ENCODE measurements at regions of chr5 and their contacts with region 1.

Region 1: GRCh38 chr5:14871210-14872069 is at the start of gene ANKH:
- DNase-seq: peak; percentile 74 to 90 (median 85)
- ATAC-seq: peak; percentile 95
- H3K4me3 ChIP-seq: peak within 1 kb of the TSS; percentile 69
- H3K4me3 Mint-ChIP-seq: peak within 1 kb of the TSS; percentile 84 to 100 (median 96)
- H3K27ac ChIP-seq: peak within 1 kb of the TSS; percentile 87
- H3K27ac Mint-ChIP-seq: peak within 1 kb of the TSS; percentile 86 to 98 (median 95)
- H3K4me1 ChIP-seq: peaks cover 6 to 12% of the 10 kb centered on the region in 2 donors
- H3K4me1 Mint-ChIP-seq: peaks cover 19 to 54% (median 39%) of the 10 kb centered on the region in 7 donors
- H3K27me3 ChIP-seq: no peaks in the 10 kb centered on the region
- H3K27me3 Mint-ChIP-seq: peaks cover 0 to 18% (median 0%) of the 10 kb centered on the region in 5 donors
- total RNA-seq, gene ANKH: 40.6 to 190 (median 113) TPM

Region 2: GRCh38 chr5:14364576-14365472 is 506.6 kb before region 1 on chr5:
- CTCF ChIA-PET with region 1: no interaction called
- POLR2A ChIA-PET with region 1: no interaction called
- intact Hi-C with region 1: loop called in 1 of 2 experiments (anchors 5 kb)
- DNase-seq: no peak
- ATAC-seq: no peak
- H3K4me3 ChIP-seq: no peak overlapping the region
- H3K4me3 Mint-ChIP-seq: peak overlapping the region in 1 of 10 donors; percentile 48
- H3K27ac ChIP-seq: no peak overlapping the region
- H3K27ac Mint-ChIP-seq: peak overlapping the region in 4 of 9 donors; percentile 13 to 73 (median 46)
- H3K4me1 ChIP-seq: peaks cover 9 to 12% of the 10 kb centered on the region in 2 donors
- H3K4me1 Mint-ChIP-seq: peaks cover 17 to 55% (median 28%) of the 10 kb centered on the region in 7 donors
- H3K27me3 ChIP-seq: no peaks in the 10 kb centered on the region
- H3K27me3 Mint-ChIP-seq: no peaks in the 10 kb centered on the region

Region 3: GRCh38 chr5:14595189-14595588 is 276.3 kb before region 1 on chr5:
- CTCF ChIA-PET with region 1: no interaction called
- POLR2A ChIA-PET with region 1: no interaction called
- intact Hi-C with region 1: loop called in 1 of 2 experiments (anchors 1 kb)
- DNase-seq: peak in 8 of 9 donors; percentile 29 to 69 (median 58)
- ATAC-seq: peak; percentile 72
- H3K4me3 ChIP-seq: peak overlapping the region; percentile 62
- H3K4me3 Mint-ChIP-seq: peak overlapping the region; percentile 76 to 86 (median 84)
- H3K27ac ChIP-seq: peak overlapping the region; percentile 70
- H3K27ac Mint-ChIP-seq: peak overlapping the region; percentile 94 to 99 (median 97)
- H3K4me1 ChIP-seq: peaks cover 59 to 66% of the 10 kb centered on the region in 2 donors
- H3K4me1 Mint-ChIP-seq: peaks cover 72 to 92% (median 85%) of the 10 kb centered on the region in 7 donors
- H3K27me3 ChIP-seq: no peaks in the 10 kb centered on the region
- H3K27me3 Mint-ChIP-seq: no peaks in the 10 kb centered on the region

Region 4: GRCh38 chr5:14706615-14707021 is 164.8 kb before region 1 on chr5:
- CTCF ChIA-PET with region 1: interaction called, 9 read pairs
- POLR2A ChIA-PET with region 1: interaction called, 64 read pairs
- intact Hi-C with region 1: loop called (anchors 1 kb)
- DNase-seq: peak in 8 of 9 donors; percentile 33 to 88 (median 84)
- ATAC-seq: peak; percentile 96
- H3K4me3 ChIP-seq: peak overlapping the region; percentile 4
- H3K4me3 Mint-ChIP-seq: peak overlapping the region; percentile 74 to 94 (median 86)
- H3K27ac ChIP-seq: peak overlapping the region; percentile 72
- H3K27ac Mint-ChIP-seq: peak overlapping the region; percentile 96 to 100 (median 99)
- H3K4me1 ChIP-seq: peaks cover 34 to 75% of the 10 kb centered on the region in 2 donors
- H3K4me1 Mint-ChIP-seq: peaks cover 50 to 96% (median 86%) of the 10 kb centered on the region in 7 donors
- H3K27me3 ChIP-seq: no peaks in the 10 kb centered on the region
- H3K27me3 Mint-ChIP-seq: no peaks in the 10 kb centered on the region

Region 5: DNA sequence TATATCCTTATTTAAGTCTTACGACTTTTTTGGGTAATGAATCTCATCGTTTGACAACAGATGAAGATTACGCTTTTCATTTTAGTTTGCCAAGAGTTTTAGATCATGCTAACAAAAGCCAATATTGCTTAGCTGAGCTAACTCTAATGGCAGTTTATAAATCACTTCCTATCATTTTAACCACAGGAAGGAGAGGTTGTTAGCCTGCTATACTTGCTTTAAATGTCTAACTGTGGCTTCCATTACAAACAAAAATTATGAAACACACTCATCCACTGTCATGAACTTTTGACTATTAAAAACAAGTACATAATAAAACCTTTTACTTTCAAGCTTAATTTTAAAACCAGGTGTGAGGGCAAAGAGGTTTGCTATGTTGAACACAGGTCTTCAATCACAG is 53.9 kb after region 1 on chr5:
- CTCF ChIA-PET with region 1: no interaction called
- POLR2A ChIA-PET with region 1: interaction called, 5 read pairs
- intact Hi-C with region 1: loop called (anchors 5 kb)
- DNase-seq: no peak
- ATAC-seq: no peak
- H3K4me3 ChIP-seq: no peak overlapping the region
- H3K4me3 Mint-ChIP-seq: peak overlapping the region in 7 of 10 donors; percentile 17 to 72 (median 54)
- H3K27ac ChIP-seq: no peak overlapping the region
- H3K27ac Mint-ChIP-seq: peak overlapping the region; percentile 53 to 83 (median 78)
- H3K4me1 ChIP-seq: peaks cover 11 to 14% of the 10 kb centered on the region in 2 donors
- H3K4me1 Mint-ChIP-seq: peaks cover 6 to 38% (median 26%) of the 10 kb centered on the region in 7 donors
- H3K27me3 ChIP-seq: no peaks in the 10 kb centered on the region
- H3K27me3 Mint-ChIP-seq: no peaks in the 10 kb centered on the region

Region 6: GRCh38 chr5:15003511-15003920 is 132.1 kb after region 1 on chr5:
- CTCF ChIA-PET with region 1: interaction called, 5 read pairs
- POLR2A ChIA-PET with region 1: interaction called, 4 read pairs
- intact Hi-C with region 1: loop called in 1 of 2 experiments (anchors 2 kb)
- DNase-seq: peak; percentile 10 to 77 (median 69)
- ATAC-seq: peak; percentile 96
- H3K4me3 ChIP-seq: no peak overlapping the region
- H3K4me3 Mint-ChIP-seq: no peak overlapping the region
- H3K27ac ChIP-seq: no peak overlapping the region
- H3K27ac Mint-ChIP-seq: peak overlapping the region in 1 of 9 donors; percentile 33
- H3K4me1 ChIP-seq: no peaks in the 10 kb centered on the region
- H3K4me1 Mint-ChIP-seq: peaks cover 0 to 20% (median 0%) of the 10 kb centered on the region in 7 donors
- H3K27me3 ChIP-seq: peaks cover 0 to 3% of the 10 kb centered on the region in 2 donors
- H3K27me3 Mint-ChIP-seq: peaks cover 0 to 38% (median 0%) of the 10 kb centered on the region in 5 donors

Measured in naive thymus-derived CD4-positive, alpha-beta T cell (primary cell).